Activated naive CD4-positive, alpha-beta T cell treated with anti-CD3 and anti-CD28 coated beads for 36 hours (primary cell): ENCODE measurements at regions of chr2 and their contacts with region 1.

Region 1: DNA sequence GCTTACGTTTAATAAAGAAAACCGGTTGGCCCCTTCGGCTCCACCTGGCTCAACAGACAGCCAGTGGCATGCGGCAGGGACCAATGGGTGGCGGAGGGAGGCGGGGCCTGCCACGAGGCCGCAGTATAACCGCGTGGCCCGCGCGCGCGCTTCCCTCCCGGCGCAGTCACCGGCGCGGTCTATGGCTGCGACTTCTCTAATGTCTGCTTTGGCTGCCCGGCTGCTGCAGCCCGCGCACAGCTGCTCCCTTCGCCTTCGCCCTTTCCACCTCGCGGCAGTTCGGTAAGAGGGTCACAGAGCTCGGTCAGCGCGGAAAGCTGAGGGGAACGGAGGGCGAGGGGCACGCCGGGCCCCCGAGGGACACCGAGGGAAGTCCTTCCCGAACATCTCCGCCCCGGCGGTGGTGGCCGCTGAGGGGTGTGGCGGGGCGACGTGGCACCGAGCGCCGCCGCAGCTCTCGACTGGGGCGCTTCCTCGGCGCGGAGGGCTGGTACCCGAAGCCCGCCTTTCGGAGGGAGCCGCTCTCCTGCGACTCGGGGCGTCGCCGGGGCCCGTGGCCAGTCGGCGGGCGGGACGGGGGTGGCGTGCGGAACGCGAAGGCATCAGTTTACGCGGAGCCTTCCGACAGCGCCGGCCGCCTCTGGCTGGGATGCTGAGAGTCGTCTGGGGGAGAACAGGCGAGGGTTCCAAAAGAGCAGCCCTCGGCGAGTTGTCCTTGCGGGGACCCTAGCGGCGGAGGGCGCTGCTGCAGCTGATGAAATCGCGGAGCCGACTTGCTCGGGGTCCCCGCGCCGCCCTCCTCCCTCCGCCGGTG is at the start of gene MTHFD2:
- DNase-seq: peak; percentile 95
- H3K4me3 Mint-ChIP-seq: peak within 1 kb of the TSS; percentile 97
- H3K27ac Mint-ChIP-seq: peak within 1 kb of the TSS; percentile 99
- H3K4me1 Mint-ChIP-seq: peaks cover 36% of the 10 kb centered on the region
- H3K27me3 Mint-ChIP-seq: no peaks in the 10 kb centered on the region
- total RNA-seq, gene MTHFD2: 683 to 692 TPM

Region 2: DNA sequence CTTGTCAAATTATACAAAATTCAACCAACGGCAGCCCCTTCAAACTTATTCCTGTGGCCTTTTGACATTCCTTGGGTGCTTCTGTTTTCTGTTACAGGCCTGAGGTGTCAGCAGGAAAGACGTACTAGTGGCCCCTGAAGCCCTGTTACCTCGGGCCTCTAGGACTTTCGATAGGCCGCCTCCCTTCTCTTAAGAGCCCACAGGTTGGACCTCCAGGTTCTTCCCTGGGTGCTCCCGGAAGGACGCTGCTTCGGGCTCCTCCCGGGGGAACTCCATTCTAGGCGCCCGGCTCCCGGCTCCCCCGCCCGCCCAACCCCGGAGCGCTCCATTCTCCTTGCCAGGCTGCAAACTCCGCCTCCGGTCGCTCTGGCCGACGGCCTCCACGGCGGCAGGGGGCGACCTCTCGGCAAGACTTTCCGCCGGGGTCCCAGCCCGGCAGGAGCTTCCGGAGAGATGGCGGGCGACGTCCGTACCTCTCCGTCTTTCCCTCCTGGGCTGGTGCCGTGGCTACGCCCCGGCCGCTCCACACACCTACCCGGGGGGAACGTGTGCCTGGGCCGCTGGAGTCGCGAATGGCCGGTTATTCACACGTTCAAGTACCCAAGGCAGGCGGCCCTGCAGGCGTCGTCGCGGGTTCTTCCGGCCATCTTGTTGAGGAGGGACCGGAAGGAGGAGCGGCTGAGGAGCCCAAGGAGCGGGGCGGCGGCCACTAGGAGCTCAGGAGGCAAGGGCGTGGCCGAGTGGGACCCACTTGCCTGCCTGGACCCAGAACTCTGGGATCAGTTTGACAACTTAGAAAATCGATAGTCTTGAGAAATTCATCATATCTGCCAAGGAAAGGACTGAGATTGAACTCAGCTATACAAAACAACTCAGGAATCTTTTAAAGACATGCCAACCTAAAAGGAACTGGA is 78.5 kb before region 1 on chr2:
- CTCF ChIA-PET with region 1: no interaction called
- intact Hi-C with region 1: loop called (anchors 2 kb)
- DNase-seq: peak; percentile 88
- H3K4me3 Mint-ChIP-seq: peak overlapping the region; percentile 82
- H3K27ac Mint-ChIP-seq: peak overlapping the region; percentile 88
- H3K4me1 Mint-ChIP-seq: peaks cover 12% of the 10 kb centered on the region
- H3K27me3 Mint-ChIP-seq: no peaks in the 10 kb centered on the region

Region 3: DNA sequence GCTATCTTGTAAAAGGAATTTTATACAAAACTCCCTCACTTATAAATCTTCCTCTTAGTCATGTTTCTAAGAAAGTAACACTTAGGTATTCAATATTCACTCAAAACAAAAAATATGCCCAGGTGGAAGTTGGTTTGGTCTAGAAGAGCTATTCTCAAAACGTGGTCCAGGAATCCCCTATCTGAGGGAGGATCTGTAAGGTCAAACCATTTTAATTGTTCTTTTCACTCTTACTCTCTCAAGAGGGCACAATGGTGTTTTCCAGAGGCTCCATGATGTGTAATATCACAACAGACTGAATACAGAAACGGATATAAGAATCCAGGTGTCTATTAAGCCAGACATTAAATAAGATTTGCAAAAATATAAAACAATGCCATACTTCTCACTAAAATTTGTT is 29.9 kb before region 1 on chr2:
- CTCF ChIA-PET with region 1: no interaction called
- intact Hi-C with region 1: loop called (anchors 1 kb)
- DNase-seq: peak; percentile 27
- H3K4me3 Mint-ChIP-seq: no peak overlapping the region
- H3K27ac Mint-ChIP-seq: peak overlapping the region; percentile 87
- H3K4me1 Mint-ChIP-seq: peaks cover 26% of the 10 kb centered on the region
- H3K27me3 Mint-ChIP-seq: no peaks in the 10 kb centered on the region

Region 4: DNA sequence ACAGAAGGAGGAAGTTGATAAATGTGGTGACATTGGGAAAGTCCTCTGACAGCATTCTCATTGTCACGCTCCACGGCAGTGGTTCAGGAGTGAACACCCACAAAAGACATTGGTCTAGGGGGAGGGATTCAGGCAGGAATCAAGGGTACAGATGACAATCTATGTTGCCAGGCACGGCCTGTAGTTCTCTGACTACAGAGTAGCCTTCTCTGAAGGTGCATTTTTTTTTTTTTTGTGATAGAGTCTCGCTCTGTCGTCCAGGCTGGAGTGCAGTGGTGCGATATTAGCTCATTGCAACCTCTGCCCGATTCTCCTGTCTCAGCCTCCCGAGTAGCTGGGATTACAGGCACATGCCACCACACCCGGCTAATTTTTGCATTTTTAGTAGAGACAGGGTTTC is 12.6 kb before region 1 on chr2:
- CTCF ChIA-PET with region 1: interaction called, 5 read pairs
- intact Hi-C with region 1: loop called (anchors 1 kb)
- DNase-seq: peak; percentile 84
- H3K4me3 Mint-ChIP-seq: no peak overlapping the region
- H3K27ac Mint-ChIP-seq: peak overlapping the region; percentile 87
- H3K4me1 Mint-ChIP-seq: peaks cover 23% of the 10 kb centered on the region
- H3K27me3 Mint-ChIP-seq: peaks cover 2% of the 10 kb centered on the region

Region 5: GRCh38 chr2:74440378-74441169 is 241.9 kb after region 1 on chr2:
- CTCF ChIA-PET with region 1: no interaction called
- intact Hi-C with region 1: no loop called
- DNase-seq: peak; percentile 65
- H3K4me3 Mint-ChIP-seq: peak overlapping the region; percentile 22
- H3K27ac Mint-ChIP-seq: no peak overlapping the region
- H3K4me1 Mint-ChIP-seq: peaks cover 15% of the 10 kb centered on the region
- H3K27me3 Mint-ChIP-seq: peaks cover 37% of the 10 kb centered on the region

Region 6: DNA sequence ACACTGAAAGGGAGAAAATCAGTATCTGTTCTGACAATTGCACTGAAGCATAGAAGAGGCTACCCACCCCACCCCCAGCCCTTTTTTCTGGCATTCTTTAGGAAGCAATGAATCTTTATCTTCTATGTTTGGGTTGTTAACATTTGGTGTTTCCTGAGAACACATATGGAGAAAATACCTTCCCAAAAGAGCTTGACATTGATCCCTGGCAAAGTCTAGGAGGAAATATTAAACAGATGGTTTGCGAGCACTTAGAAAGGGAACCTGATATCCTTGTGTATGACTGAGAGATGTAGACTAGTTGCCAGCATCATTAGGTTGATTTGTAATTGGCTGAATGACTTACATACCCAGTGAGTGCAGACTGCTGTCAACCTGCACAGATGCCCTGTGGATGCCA is 398.7 kb after region 1 on chr2:
- CTCF ChIA-PET with region 1: no interaction called
- intact Hi-C with region 1: no loop called
- DNase-seq: no peak
- H3K4me3 Mint-ChIP-seq: no peak overlapping the region
- H3K27ac Mint-ChIP-seq: no peak overlapping the region
- H3K4me1 Mint-ChIP-seq: peaks cover 3% of the 10 kb centered on the region
- H3K27me3 Mint-ChIP-seq: peaks cover 21% of the 10 kb centered on the region